T-cell (primary cell): ENCODE measurements at regions of chr5 and their contacts with region 1.

Region 1: DNA sequence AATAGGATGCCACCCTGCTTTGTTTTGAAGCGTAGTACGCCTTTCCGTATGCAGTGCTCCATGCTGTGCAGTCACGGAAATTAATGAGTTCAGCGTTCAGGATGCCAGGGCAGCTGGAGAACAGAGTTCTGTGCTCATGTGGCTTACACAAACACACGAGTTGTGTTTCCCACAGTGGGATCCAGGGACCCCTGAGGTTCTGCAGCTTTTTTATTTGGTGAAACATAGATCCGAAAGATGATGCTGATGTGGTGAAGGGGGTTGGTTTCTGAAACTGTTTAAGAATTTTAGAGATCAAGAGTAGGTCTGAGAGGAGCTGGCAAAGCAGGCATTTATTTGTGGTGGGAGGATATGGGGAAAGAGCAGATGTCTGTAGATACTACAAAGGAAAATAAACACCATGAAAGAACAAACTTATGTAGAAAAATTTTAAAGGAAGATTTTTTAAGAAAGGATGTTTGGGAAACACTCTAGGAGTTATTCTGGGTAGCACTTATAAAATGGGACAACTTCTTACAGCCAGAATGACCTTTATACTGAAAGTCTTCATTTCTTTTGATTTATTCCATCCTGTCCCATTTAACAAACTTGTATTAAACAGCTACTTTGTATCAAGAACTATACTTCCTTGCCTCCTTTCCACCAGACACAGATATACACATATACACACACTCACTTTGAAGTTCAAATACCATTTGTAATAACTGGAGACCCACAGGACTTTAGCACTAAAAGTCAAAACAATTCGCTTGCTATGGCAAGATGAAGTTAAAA is 52.7 kb downstream of the ITGA1 start:
- DNase-seq: no peak
- ATAC-seq: no peak
- H3K4me3 ChIP-seq: no peak overlapping the region
- H3K4me3 Mint-ChIP-seq: no peak overlapping the region
- H3K27ac ChIP-seq: no peak overlapping the region
- H3K27ac Mint-ChIP-seq: no peak overlapping the region
- H3K4me1 ChIP-seq: no peaks in the 10 kb centered on the region
- H3K4me1 Mint-ChIP-seq: peaks cover 8 to 15% (median 10%) of the 10 kb centered on the region in 3 donors
- H3K27me3 ChIP-seq: no peaks in the 10 kb centered on the region
- H3K27me3 Mint-ChIP-seq: no peaks in the 10 kb centered on the region

Region 2: GRCh38 chr5:52738095-52738506 is 102.4 kb before region 1 on chr5:
- CTCF ChIA-PET with region 1: interaction called in 1 of 2 experiments, 12 read pairs
- POLR2A ChIA-PET with region 1: no interaction called
- DNase-seq: no peak
- ATAC-seq: peak in 1 of 4 experiments; percentile 37
- H3K4me3 ChIP-seq: no peak overlapping the region
- H3K4me3 Mint-ChIP-seq: peak overlapping the region in 1 of 3 donors; percentile 0
- H3K27ac ChIP-seq: no peak overlapping the region
- H3K27ac Mint-ChIP-seq: peak overlapping the region; percentile 66 to 73
- H3K4me1 ChIP-seq: peaks cover 13 to 49% of the 10 kb centered on the region in 2 experiments
- H3K4me1 Mint-ChIP-seq: peaks cover 33 to 46% (median 42%) of the 10 kb centered on the region in 3 donors
- H3K27me3 ChIP-seq: no peaks in the 10 kb centered on the region
- H3K27me3 Mint-ChIP-seq: no peaks in the 10 kb centered on the region

Region 3: GRCh38 chr5:52811067-52811749 is 29.3 kb before region 1 on chr5:
- CTCF ChIA-PET with region 1: no interaction called
- POLR2A ChIA-PET with region 1: interaction called in 1 of 2 experiments, 17 read pairs
- DNase-seq: no peak
- ATAC-seq: no peak
- H3K4me3 ChIP-seq: no peak overlapping the region
- H3K4me3 Mint-ChIP-seq: no peak overlapping the region
- H3K27ac ChIP-seq: no peak overlapping the region
- H3K27ac Mint-ChIP-seq: no peak overlapping the region
- H3K4me1 ChIP-seq: no peaks in the 10 kb centered on the region
- H3K4me1 Mint-ChIP-seq: peaks cover 0 to 4% (median 2%) of the 10 kb centered on the region in 3 donors
- H3K27me3 ChIP-seq: no peaks in the 10 kb centered on the region
- H3K27me3 Mint-ChIP-seq: no peaks in the 10 kb centered on the region

Region 4: DNA sequence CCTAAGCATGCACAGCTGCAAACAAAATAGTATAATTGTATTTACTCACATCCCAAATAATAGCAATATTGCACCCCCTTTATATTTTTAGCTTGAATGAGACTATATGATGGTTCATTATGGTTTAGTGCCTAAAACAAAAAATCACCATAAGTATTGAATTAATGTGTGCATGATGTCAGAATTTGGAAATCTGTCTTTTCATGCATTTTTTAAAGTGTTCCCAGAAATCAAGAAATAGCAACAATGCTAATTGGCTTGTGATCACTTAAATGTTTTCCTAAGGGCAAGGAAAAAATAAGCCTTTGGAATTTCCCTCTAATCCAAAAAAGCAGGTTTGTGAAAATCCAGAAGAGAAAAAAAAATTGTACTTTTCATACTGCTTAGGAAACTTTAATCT is 97.8 kb after region 1 on chr5:
- CTCF ChIA-PET with region 1: no interaction called
- POLR2A ChIA-PET with region 1: no interaction called
- DNase-seq: no peak
- ATAC-seq: no peak
- H3K4me3 ChIP-seq: no peak overlapping the region
- H3K4me3 Mint-ChIP-seq: no peak overlapping the region
- H3K27ac ChIP-seq: no peak overlapping the region
- H3K27ac Mint-ChIP-seq: no peak overlapping the region
- H3K4me1 ChIP-seq: no peaks in the 10 kb centered on the region
- H3K4me1 Mint-ChIP-seq: no peaks in the 10 kb centered on the region
- H3K27me3 ChIP-seq: no peaks in the 10 kb centered on the region
- H3K27me3 Mint-ChIP-seq: no peaks in the 10 kb centered on the region